ENCODE measurements at regions of chr6 and their contacts with region 1.

Region 1: DNA sequence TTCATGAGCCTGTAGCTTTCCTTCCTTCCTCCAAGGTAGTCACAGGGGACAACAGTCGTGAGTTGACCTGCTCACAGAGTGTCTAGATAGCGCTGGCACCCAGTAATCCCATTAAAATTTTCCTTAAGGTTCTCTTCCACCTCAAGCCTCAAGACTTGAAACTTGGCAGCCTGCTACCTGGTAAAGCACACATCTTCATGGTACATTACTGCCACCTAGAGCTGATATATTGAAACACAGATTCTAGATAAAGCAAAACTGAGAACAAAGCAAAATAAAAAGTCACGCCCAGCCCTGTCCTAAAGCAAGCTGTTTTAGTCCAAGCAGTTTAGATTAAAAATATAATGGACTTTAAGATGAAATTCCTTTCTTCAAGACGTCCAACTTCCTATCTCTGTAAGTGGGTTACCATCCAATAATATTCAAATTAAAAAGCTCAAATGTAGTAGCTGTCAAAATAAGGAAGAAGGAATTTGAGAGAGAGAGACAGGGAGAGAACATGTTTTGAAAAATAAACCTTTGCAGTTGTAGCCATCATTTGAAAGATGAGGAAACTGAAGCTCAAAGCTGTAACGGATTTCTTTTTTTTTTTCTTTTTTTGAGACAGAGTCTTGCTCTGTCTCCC is 50.7 kb upstream of the CD83 start:
- DNase-seq: peak; percentile 45
- H3K4me3 ChIP-seq: no peak overlapping the region
- CTCF ChIP-seq: peak; percentile 41

Region 2: DNA sequence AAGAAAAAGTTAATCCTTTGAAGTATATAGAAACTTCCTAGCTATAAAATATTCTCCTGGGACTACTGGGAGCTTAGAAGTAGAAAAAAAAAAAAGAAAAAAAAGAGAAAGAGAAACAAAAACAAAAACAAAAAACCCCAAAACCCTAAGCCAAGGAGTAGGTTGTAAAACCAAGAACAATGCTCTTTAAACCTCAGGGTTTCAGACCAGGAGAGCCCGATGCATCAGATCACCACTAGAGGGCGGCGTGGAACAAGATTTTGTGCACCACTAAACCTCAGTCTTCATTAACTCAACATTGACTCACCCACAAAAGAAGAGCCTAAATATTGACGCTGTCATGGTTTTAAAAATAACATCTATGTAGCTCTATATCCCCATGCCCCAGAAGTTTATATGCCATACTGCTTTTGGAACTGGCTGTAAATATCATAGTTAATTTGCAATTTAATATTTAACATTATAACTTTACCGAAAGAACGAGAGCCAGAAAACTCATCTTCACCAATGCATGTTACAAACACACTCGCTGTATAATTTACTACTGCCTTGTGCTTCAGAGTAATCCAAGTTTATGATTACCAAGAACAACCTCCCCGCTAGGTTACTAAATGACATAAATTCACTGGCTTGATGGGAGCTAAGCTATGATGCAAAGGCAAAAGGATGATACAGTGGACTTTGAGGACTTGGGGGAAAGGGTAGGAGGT is 271.7 kb before region 1 on chr6:
- CTCF ChIA-PET with region 1: interaction called, 29 read pairs
- POLR2A ChIA-PET with region 1: no interaction called
- DNase-seq: peak; percentile 31
- H3K4me3 ChIP-seq: no peak overlapping the region
- CTCF ChIP-seq: peak; percentile 87

Region 3: DNA sequence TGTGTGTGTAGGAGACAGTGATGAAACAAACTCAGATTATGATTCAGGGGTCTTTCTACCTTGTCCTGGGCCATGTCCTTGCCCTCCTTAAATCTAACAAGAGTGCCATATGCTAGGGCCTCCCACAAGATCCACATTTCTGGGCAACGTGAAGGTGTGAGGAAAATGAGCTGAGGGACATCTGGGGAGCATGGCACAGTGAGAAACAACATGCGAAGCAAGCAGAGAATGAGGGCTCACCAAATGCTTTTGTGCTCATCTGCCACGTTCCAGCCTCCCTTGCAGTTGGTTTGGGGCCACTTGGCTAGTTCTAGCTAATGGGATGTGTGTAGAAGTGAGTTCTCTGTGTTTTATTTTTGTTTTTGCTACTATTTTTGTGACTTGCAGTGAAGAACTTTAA is 163.5 kb before region 1 on chr6:
- CTCF ChIA-PET with region 1: interaction called, 530 read pairs
- POLR2A ChIA-PET with region 1: interaction called, 4 read pairs
- DNase-seq: no peak
- H3K4me3 ChIP-seq: no peak overlapping the region
- CTCF ChIP-seq: no peak

Region 4: DNA sequence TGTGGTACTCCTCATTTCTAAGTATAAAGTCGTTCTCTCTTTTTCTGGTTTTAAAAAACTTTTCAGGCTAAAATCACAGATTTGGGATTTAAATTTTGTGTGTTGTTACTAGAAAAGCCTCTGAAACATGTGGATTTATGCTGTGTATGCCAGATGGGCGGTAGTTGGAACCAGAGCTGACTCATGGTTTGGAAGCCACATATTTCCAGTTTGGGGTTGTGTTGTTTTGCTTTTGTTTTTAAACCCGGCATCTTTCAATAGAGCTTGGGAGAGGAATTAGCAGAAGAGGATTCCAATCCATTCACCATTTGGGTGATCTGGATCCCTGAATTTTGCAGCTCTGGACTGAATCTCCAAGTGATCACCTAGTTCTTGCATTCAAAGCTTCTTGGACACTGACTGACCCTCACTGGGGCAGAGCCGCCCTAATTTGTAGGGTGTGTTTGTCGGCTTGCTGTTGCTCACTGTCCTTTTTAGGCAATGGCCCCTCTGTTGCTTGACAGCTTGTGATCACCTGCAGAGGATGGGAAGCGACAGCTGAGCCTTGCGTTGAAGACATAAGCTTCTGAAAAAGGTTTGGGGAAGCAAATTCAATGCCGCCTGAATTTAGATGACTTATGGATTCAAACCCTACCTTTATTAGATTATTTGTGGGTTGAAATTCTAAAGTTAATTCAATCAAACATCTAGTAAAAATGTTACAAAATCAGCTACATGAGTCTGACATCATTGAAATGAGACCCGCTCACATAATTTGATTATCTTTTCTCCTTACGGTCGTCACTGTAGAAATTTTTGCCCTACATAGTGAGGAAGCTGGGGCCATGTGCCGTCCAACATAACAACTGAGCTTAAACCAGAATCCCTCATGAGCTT is 29.3 kb before region 1 on chr6:
- CTCF ChIA-PET with region 1: interaction called, 55 read pairs
- POLR2A ChIA-PET with region 1: no interaction called
- DNase-seq: no peak
- H3K4me3 ChIP-seq: no peak overlapping the region
- CTCF ChIP-seq: no peak

Region 5: GRCh38 chr6:14095437-14095836 is 28.5 kb after region 1 on chr6:
- CTCF ChIA-PET with region 1: no interaction called
- POLR2A ChIA-PET with region 1: no interaction called
- DNase-seq: no peak
- H3K4me3 ChIP-seq: no peak overlapping the region
- CTCF ChIP-seq: no peak

Region 6: DNA sequence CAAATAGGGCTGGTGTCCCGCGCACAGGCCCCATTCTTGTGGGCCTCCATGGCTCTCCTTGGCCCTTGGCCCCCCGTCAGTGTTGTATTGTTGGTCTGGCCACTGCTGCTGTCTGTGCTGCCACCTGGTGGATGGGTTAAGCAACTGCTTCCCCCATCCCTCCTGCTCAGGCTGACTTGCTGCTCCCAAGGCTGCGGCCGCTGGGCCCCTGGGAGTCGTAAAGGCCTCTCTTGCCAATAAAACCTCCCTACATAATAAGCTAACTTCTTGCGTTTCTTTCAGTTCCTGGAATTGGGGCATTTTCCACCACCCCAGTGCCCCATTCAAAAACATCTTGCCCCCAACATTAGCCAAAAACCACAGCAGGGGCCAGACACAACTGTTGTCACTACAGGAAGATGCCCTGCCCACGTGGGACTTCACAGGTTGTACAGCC is 77.8 kb after region 1 on chr6:
- CTCF ChIA-PET with region 1: interaction called, 11 read pairs
- POLR2A ChIA-PET with region 1: no interaction called
- DNase-seq: no peak
- H3K4me3 ChIP-seq: no peak overlapping the region
- CTCF ChIP-seq: peak; percentile 95

Region 7: DNA sequence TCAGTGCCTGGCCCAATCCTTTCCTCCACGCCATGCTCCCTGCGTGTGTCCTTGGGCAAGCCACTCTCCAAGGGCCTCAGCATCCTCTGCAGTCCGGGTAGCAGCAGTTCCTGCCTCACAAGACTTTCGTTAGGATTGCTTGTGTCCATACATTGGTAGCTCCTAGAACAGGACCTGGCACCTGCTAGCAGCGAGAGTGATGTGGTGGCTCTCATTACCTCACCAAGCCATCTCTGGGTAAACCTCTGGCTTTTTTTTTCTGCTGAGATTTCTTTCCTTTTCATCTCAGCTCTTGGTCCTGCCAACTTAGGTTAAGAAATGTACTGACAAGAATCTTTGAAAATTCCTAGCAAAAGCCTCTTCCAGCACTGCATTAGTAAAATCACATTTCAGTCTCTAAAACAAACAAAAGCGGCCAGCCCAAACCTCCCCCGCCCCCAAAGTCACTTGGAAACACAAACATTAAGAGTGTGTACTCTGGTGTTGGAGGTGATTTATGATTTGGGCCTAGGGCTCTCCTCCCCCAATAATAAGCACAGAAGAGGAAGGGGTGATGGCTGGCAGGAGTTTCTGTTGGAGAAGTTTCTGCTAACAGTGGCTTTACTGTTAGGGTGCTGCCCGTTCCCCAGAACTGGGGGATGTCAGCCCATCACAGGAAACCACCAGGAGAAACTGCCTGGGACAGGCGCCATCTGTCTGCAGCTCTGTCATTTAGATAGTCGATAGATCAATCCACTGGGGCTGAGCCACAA is 249.9 kb after region 1 on chr6:
- CTCF ChIA-PET with region 1: no interaction called
- POLR2A ChIA-PET with region 1: no interaction called
- DNase-seq: no peak
- H3K4me3 ChIP-seq: no peak overlapping the region
- CTCF ChIP-seq: no peak

Region 8: GRCh38 chr6:14348389-14348788 is 281.5 kb after region 1 on chr6:
- CTCF ChIA-PET with region 1: no interaction called
- POLR2A ChIA-PET with region 1: no interaction called
- DNase-seq: no peak
- H3K4me3 ChIP-seq: no peak overlapping the region
- CTCF ChIP-seq: no peak

Region 9: DNA sequence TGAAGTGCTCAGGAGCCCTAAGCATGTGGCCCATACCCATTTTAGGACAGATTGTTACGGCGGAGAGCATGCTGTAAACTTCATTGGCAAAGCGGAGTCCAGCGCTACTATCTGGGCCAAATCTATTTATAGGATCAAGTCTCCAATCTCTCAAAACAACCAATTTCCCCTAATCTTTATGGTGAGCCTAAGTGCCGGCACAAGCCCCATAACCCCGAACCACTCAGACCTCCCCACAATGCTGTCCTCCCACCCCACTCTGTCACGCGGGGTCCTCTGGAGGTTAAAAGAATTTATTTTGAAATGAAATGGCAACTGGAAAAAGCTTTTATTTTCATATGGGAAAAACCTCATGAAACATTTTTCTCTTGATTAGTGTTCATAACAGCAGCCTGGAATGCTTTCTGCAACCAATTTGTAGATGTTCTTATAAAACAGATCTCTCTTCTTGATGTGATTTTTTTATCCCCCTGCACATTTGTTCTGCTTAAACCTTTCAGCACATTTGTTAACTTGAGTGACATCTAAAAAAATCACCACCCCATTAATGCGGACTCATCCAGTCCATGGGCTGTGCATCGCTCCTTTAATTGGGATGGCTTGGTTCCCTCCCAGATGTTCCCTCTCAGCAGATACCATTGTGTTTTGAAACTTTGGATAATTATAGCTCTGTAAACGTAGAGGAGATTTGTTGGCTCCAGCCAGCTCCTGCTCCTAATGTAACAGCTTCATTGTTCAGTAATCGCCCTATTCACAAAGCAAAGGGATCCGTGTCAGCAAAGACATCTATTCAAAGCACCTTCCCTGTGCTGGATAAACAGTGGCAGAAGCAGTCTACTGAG is 374.3 kb after region 1 on chr6:
- CTCF ChIA-PET with region 1: no interaction called
- POLR2A ChIA-PET with region 1: no interaction called
- DNase-seq: no peak
- H3K4me3 ChIP-seq: no peak overlapping the region
- CTCF ChIP-seq: no peak